ENCODE measurements at regions of chr6 and their contacts with region 1.

Region 1: DNA sequence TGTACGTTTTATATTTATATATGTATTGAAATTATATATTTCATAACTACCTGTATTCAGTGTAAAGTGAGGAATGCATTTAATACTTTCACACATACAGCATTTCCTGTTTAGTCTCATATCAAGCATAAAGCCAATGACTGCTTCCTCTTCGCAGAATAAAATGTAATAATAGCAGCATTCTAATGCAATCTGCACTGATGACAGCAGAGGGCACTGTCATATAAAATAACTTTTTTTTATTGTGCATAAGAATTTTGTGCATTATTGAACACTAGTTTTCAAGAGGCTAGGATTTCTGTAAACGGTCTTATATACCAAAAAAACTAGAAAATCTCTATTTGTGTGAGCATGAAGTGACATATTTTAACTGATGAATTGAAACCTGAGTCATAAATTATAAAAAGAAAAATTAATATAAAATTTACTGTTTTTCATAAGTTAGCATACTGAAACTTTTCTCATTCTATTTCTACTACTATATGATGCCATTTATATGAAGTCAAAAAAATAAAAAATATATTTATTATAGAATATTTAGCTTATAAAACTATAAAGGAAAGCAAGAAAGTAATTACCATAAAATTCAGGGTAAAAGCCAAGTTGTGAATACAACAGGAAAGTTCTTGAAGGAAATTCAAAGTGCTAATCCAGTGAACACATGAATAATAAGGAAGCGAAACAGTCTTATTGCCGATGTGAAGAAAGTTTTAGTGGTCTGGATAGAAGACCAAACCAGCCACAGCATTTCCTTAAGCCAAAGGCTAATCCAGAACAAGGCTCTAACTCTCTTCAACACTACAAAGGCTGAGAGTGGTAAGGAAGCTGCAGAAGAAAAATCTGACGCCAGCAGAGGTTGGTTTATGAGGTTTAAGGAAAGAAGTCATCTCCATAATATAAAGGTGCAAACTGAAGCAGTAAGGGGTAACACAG is 36.3 kb downstream of the RNF146 start:
- DNase-seq: no peak
- ATAC-seq: peak; percentile 94
- H3K4me3 Mint-ChIP-seq: no peak overlapping the region
- H3K27ac Mint-ChIP-seq: peak overlapping the region; percentile 24
- H3K4me1 Mint-ChIP-seq: peaks cover 24% of the 10 kb centered on the region
- H3K27me3 Mint-ChIP-seq: no peaks in the 10 kb centered on the region
- CTCF ChIP-seq: peak; percentile 40

Region 2: DNA sequence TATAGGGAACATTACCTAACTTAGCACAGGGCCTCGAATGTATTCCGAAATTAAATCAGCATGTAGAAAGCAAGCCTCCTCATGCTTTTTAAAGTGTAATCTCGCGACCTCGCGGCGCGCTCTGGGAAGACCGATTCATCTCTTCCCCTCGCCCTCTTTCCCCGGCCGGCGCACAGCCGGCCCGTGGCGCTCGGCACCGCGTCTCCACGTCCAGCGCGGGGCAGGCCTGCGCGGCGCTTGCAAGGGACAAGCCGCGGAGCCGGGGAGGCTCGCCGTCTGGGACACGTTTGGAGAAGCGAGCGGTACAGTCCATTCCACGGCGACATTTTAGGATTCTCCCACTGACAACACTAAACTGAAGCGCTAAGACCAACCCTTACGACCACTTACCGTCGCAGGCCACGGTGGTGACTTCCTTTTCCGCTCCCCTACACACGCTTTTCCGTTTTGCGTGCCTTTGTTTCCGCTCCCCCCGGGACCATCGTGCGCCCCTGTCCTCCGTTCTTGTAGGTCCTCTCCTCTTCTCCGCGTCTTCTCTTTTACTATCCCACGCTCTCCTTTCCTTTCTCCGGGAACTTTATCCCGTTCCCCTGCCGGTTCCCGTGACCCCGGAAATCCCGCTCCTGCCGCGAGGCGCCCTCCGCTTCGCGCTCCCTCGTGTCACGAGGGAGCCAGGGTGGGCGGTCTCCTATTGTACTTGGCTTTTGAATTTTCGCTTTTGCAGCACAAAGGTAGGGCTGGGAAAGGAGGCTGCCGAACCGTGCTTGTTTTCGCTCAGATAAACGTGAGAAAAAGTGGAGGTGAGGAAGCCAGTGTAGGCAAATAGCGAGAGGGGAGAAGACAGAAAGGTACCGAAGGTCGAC is 40.2 kb after region 1 on chr6 and contains the start of gene ECHDC1:
- CTCF ChIA-PET with region 1: interaction called, 8 read pairs
- POLR2A ChIA-PET with region 1: no interaction called
- intact Hi-C with region 1: loop called (anchors 2 kb)
- DNase-seq: peak; percentile 57
- ATAC-seq: peak; percentile 69
- H3K4me3 Mint-ChIP-seq: no peak within 1 kb of the TSS
- H3K27ac Mint-ChIP-seq: no peak within 1 kb of the TSS
- H3K4me1 Mint-ChIP-seq: peaks cover 12% of the 10 kb centered on the region
- H3K27me3 Mint-ChIP-seq: no peaks in the 10 kb centered on the region
- CTCF ChIP-seq: no peak
- total RNA-seq, gene ECHDC1: 57.3 and 59.7 TPM in 2 replicates

Region 3: GRCh38 chr6:127391094-127391953 is 88.3 kb after region 1 on chr6:
- CTCF ChIA-PET with region 1: no interaction called
- POLR2A ChIA-PET with region 1: no interaction called
- intact Hi-C with region 1: no loop called
- DNase-seq: no peak
- ATAC-seq: no peak
- H3K4me3 Mint-ChIP-seq: no peak overlapping the region
- H3K27ac Mint-ChIP-seq: no peak overlapping the region
- H3K4me1 Mint-ChIP-seq: no peaks in the 10 kb centered on the region
- H3K27me3 Mint-ChIP-seq: no peaks in the 10 kb centered on the region
- CTCF ChIP-seq: no peak

Region 4: DNA sequence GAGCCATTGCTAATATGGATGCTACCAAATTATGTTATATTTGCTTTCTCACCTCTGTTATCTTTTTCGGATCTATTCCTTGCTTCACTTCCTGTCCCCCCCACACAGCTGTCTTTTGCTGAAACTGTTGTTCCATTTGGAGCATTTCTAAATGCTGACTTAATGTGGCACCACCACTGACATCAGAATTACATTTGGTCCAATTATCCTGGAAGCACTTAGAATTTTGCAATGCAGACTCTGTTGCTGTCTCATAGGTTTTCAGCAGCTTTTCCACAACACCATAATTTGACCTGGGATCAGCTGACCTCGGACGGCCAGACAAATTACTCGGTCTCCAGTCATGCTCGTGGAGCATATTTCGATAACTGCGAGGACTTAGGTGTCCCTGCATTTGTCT is 143.4 kb after region 1 on chr6:
- CTCF ChIA-PET with region 1: no interaction called
- POLR2A ChIA-PET with region 1: no interaction called
- intact Hi-C with region 1: no loop called
- DNase-seq: no peak
- ATAC-seq: no peak
- H3K4me3 Mint-ChIP-seq: no peak overlapping the region
- H3K27ac Mint-ChIP-seq: no peak overlapping the region
- H3K4me1 Mint-ChIP-seq: no peaks in the 10 kb centered on the region
- H3K27me3 Mint-ChIP-seq: peaks cover 8% of the 10 kb centered on the region
- CTCF ChIP-seq: no peak

Region 5: GRCh38 chr6:127464881-127465459 is 162.0 kb after region 1 on chr6:
- CTCF ChIA-PET with region 1: interaction called, 5 read pairs
- POLR2A ChIA-PET with region 1: no interaction called
- intact Hi-C with region 1: loop called (anchors 1 kb)
- DNase-seq: no peak
- ATAC-seq: peak; percentile 52
- H3K4me3 Mint-ChIP-seq: no peak overlapping the region
- H3K27ac Mint-ChIP-seq: no peak overlapping the region
- H3K4me1 Mint-ChIP-seq: no peaks in the 10 kb centered on the region
- H3K27me3 Mint-ChIP-seq: no peaks in the 10 kb centered on the region
- CTCF ChIP-seq: no peak

Region 6: DNA sequence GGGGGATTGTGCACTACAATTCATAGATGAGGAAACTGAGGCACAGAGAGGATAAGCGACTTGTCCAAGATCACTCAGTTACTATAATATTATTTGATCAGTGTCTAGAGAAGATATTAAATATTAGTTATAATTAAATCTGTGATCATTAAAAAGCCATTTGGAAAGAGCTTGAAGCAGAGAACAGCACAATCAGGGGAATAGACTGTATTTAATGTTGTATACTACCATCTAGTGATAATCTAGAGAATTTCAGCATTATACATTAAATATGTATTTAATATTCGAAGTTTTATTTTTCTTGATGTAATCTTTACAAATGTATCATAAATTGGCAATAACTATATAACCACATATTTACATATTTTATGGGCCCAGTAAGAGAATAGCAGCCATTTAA is 236.3 kb after region 1 on chr6:
- CTCF ChIA-PET with region 1: interaction called, 30 read pairs
- POLR2A ChIA-PET with region 1: no interaction called
- intact Hi-C with region 1: loop called (anchors 1 kb)
- DNase-seq: no peak
- ATAC-seq: no peak
- H3K4me3 Mint-ChIP-seq: no peak overlapping the region
- H3K27ac Mint-ChIP-seq: no peak overlapping the region
- H3K4me1 Mint-ChIP-seq: no peaks in the 10 kb centered on the region
- H3K27me3 Mint-ChIP-seq: peaks cover 8% of the 10 kb centered on the region
- CTCF ChIP-seq: no peak